ENCODE measurements at regions of chr3 and their contacts with region 1.

Region 1: GRCh38 chr3:89740881-89741177 is 633.4 kb downstream of the EPHA3 start:
- DNase-seq: no peak
- H3K4me3 Mint-ChIP-seq: no peak overlapping the region
- H3K27ac Mint-ChIP-seq: no peak overlapping the region
- H3K4me1 Mint-ChIP-seq: no peaks in the 10 kb centered on the region
- H3K27me3 Mint-ChIP-seq: no peaks in the 10 kb centered on the region
- CTCF ChIP-seq: no peak

Region 2: GRCh38 chr3:89690646-89691045 is 50.2 kb before region 1 on chr3:
- CTCF ChIA-PET with region 1: no interaction called
- intact Hi-C with region 1: loop called (anchors 10 kb)
- DNase-seq: no peak
- H3K4me3 Mint-ChIP-seq: no peak overlapping the region
- H3K27ac Mint-ChIP-seq: no peak overlapping the region
- H3K4me1 Mint-ChIP-seq: peaks cover 13% of the 10 kb centered on the region
- H3K27me3 Mint-ChIP-seq: no peaks in the 10 kb centered on the region
- CTCF ChIP-seq: no peak

Region 3: GRCh38 chr3:89795506-89795905 is 54.7 kb after region 1 on chr3:
- CTCF ChIA-PET with region 1: no interaction called
- intact Hi-C with region 1: loop called (anchors 10 kb)
- DNase-seq: no peak
- H3K4me3 Mint-ChIP-seq: no peak overlapping the region
- H3K27ac Mint-ChIP-seq: no peak overlapping the region
- H3K4me1 Mint-ChIP-seq: peaks cover 36% of the 10 kb centered on the region
- H3K27me3 Mint-ChIP-seq: no peaks in the 10 kb centered on the region
- CTCF ChIP-seq: no peak

Measured in Calu3 (cell line).